GM12878 (cell line): ENCODE measurements at regions of chr7 and their contacts with region 1.

Region 1: GRCh38 chr7:69803699-69804516 is 205.6 kb downstream of the AUTS2 start:
- DNase-seq: peak; percentile 100
- ATAC-seq: peak; percentile 82
- H3K4me3 ChIP-seq: peak overlapping the region; percentile 52; the same call in 1 of the 2 replicates
- H3K27ac ChIP-seq: peak overlapping the region; percentile 97
- H3K4me1 ChIP-seq: peaks cover 55% of the 10 kb centered on the region
- H3K27me3 ChIP-seq: no peaks in the 10 kb centered on the region
- CTCF ChIP-seq: no peak
- EP300 ChIP-seq: peak; percentile 95 to 97
- POLR2A ChIP-seq: no peak
- RAD21 ChIP-seq: no peak; the same call in 1 of the 2 replicates

Region 2: DNA sequence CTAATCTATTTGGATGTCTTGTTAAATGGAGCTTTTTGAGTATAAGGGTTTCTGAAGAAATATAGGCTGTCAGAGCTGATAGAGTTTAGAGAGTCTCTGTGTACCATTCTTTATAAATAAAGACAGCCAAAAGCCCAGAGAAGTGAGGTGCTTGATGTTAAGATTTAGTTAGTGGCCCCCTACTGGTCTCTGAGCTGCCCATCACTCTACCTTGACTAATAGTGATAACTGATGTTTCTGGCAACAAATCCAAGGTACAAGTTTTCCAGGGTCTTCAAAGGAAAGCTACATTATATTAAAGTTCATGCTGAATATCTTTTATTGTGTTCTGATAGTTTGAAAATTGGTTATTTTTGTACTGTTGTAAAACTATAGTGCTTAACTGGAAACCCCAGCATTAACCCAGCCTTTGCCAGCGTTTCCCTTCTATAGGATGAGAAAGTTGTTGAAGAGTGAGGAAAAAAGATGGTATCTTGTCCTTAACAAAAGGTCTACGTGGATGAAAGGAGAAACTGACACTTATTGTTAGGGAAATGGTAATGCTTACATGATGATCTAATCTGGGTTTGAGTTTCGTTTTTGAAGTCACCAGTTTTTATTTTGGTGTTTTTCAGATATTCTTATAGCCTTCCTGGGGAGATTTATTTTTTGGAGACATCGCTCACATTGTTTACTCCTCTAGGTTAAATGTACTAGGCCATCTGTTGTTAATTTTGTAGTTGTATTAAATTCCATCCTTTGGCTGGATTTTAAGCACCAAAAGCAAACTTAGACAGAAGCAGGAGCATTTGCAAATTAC is 126.7 kb before region 1 on chr7:
- CTCF ChIA-PET with region 1: interaction called, 10 read pairs
- POLR2A ChIA-PET with region 1: interaction called, 4 read pairs
- RAD21 ChIA-PET with region 1: interaction called, 5 read pairs
- SMC1A ChIA-PET with region 1: interaction called, 8 read pairs
- in situ Hi-C with region 1: no loop called
- intact Hi-C with region 1: loop called (anchors 5 kb)
- DNase-seq: no peak
- ATAC-seq: peak; percentile 52
- H3K4me3 ChIP-seq: no peak overlapping the region
- H3K27ac ChIP-seq: peak overlapping the region; percentile 77
- H3K4me1 ChIP-seq: peaks cover 38% of the 10 kb centered on the region
- H3K27me3 ChIP-seq: no peaks in the 10 kb centered on the region
- CTCF ChIP-seq: peak; percentile 41 to 51 (median 45)
- EP300 ChIP-seq: no peak
- POLR2A ChIP-seq: no peak
- RAD21 ChIP-seq: peak; percentile 56

Region 3: GRCh38 chr7:69757981-69758430 is 45.9 kb before region 1 on chr7:
- CTCF ChIA-PET with region 1: interaction called, 6 read pairs
- POLR2A ChIA-PET with region 1: interaction called, 5 read pairs
- RAD21 ChIA-PET with region 1: interaction called, 9 read pairs
- SMC1A ChIA-PET with region 1: interaction called, 14 read pairs
- in situ Hi-C with region 1: no loop called
- intact Hi-C with region 1: loop called (anchors 2 kb)
- DNase-seq: no peak
- ATAC-seq: peak; percentile 76
- H3K4me3 ChIP-seq: no peak overlapping the region
- H3K27ac ChIP-seq: no peak overlapping the region
- H3K4me1 ChIP-seq: peaks cover under 1% of the 10 kb centered on the region
- H3K27me3 ChIP-seq: no peaks in the 10 kb centered on the region
- CTCF ChIP-seq: no peak
- EP300 ChIP-seq: 0 out of 4 replicates have a peak, but pooled peaks of 1 of the 2 experiments have one; percentile 25
- POLR2A ChIP-seq: no peak
- RAD21 ChIP-seq: no peak

Region 4: DNA sequence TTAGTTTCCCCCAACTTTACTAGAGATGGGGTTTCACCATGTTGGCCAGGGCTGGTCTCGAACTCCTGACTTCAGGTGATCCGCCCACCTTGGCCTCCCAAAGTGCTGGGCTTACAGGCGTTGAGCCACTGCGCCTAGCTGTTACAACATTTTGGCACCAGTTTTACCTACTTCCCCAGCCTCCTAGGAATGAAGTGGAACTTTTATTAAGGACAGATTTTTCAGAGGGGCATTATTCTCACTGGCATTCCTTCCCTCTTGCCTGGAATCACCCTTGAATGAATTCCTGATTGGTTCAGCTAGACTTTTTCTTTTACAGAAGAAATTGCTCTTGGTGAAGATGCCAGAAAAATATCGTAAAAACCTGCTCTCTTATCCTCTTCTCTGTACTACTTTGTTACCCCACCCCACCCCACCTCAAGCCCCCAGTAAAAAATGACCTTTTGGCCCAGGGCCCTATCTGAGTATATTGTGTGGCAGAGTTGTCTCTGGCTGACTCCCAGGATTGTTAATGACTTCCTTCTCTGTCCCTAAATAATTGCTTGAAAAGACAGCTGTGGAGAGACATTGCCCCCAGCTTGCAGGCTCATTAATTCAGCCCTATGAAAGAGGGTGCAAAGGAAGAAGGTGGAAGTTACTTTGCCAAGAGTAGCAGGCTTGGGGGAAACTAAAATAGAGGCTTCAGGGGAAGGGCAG is 16.0 kb before region 1 on chr7:
- CTCF ChIA-PET with region 1: interaction called, 11 read pairs
- POLR2A ChIA-PET with region 1: no interaction called
- RAD21 ChIA-PET with region 1: interaction called, 7 read pairs
- SMC1A ChIA-PET with region 1: interaction called, 12 read pairs
- in situ Hi-C with region 1: no loop called
- intact Hi-C with region 1: no loop called
- DNase-seq: no peak
- ATAC-seq: no peak
- H3K4me3 ChIP-seq: no peak overlapping the region
- H3K27ac ChIP-seq: no peak overlapping the region
- H3K4me1 ChIP-seq: peaks cover 11% of the 10 kb centered on the region; the same call in 1 of the 2 replicates
- H3K27me3 ChIP-seq: no peaks in the 10 kb centered on the region
- CTCF ChIP-seq: no peak
- EP300 ChIP-seq: no peak
- POLR2A ChIP-seq: no peak
- RAD21 ChIP-seq: no peak

Region 5: DNA sequence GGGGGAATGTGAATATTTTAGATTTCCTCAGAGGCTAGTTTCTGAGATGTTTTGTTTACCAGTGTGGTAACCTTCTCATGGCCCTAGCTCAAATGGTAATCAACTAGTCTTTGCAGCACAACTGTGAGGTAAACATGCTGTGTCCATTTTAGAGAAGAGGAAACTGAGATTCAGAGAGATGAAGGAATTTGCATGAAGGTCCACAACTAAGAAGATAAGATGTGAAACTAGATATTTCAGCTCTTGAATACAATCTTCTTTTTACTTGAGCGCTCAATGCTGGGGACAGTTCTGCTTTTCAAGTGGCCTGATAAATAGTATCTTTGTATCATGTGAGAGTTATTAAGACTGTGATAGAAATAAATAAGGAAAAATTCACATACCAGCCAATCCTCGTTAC is 39.7 kb after region 1 on chr7:
- CTCF ChIA-PET with region 1: interaction called, 3 read pairs
- POLR2A ChIA-PET with region 1: interaction called, 5 read pairs
- RAD21 ChIA-PET with region 1: interaction called, 18 read pairs
- SMC1A ChIA-PET with region 1: interaction called, 11 read pairs
- in situ Hi-C with region 1: no loop called
- intact Hi-C with region 1: loop called (anchors 1 kb)
- DNase-seq: peak; percentile 74
- ATAC-seq: peak; percentile 71
- H3K4me3 ChIP-seq: peak overlapping the region; percentile 25; the same call in 1 of the 2 replicates
- H3K27ac ChIP-seq: peak overlapping the region; percentile 71
- H3K4me1 ChIP-seq: peaks cover 67% of the 10 kb centered on the region
- H3K27me3 ChIP-seq: no peaks in the 10 kb centered on the region
- CTCF ChIP-seq: no peak
- EP300 ChIP-seq: no peak; a peak in 1 of 4 replicates
- POLR2A ChIP-seq: no peak
- RAD21 ChIP-seq: no peak

Region 6: DNA sequence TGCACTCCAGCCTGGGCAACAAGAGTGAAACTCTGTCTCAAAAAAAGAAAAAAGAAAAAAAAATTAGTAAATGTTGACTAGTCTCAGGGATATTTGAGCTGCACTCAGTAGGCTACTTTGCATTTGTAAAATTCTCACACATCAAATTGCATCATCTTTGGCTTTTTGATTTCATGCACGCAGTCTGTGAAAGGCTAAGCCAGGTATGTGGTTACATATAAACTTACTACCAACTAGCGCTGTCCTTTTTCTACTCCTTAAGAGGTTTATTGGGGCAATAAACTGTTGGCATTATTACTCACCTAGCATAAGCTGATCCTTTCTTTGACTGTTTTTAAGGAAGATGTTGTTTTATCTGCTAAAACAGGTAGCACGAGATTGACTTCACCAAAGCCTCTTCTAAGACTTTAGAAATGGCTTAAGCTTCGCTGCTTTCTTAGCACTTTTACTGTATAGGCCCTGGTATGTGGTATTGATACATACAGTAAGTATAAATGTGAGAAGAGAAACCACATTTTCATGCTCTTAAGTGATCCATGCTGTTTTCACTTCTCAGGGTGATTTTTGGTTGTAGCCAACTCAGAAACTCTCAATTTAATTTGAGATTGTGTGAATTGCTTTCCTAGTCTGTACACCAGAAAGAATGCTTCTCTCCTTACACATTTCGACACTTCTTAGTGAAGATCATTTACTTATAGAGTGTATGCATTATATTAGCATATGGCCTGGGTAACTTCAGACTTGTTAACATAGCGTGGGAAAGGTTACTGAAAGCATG is 118.3 kb after region 1 on chr7:
- CTCF ChIA-PET with region 1: interaction called, 3 read pairs
- POLR2A ChIA-PET with region 1: no interaction called
- RAD21 ChIA-PET with region 1: interaction called, 3 read pairs
- SMC1A ChIA-PET with region 1: interaction called, 6 read pairs
- in situ Hi-C with region 1: no loop called
- intact Hi-C with region 1: loop called (anchors 1 kb)
- DNase-seq: peak; percentile 76
- ATAC-seq: peak; percentile 92
- H3K4me3 ChIP-seq: no peak overlapping the region
- H3K27ac ChIP-seq: peak overlapping the region; percentile 91
- H3K4me1 ChIP-seq: peaks cover 16% of the 10 kb centered on the region
- H3K27me3 ChIP-seq: no peaks in the 10 kb centered on the region
- CTCF ChIP-seq: no peak
- EP300 ChIP-seq: no peak
- POLR2A ChIP-seq: no peak
- RAD21 ChIP-seq: peak; percentile 18

Region 7: GRCh38 chr7:70027867-70028266 is 224.0 kb after region 1 on chr7:
- CTCF ChIA-PET with region 1: no interaction called
- POLR2A ChIA-PET with region 1: no interaction called
- RAD21 ChIA-PET with region 1: no interaction called
- SMC1A ChIA-PET with region 1: no interaction called
- in situ Hi-C with region 1: no loop called
- intact Hi-C with region 1: no loop called
- DNase-seq: no peak
- ATAC-seq: peak; percentile 72
- H3K4me3 ChIP-seq: no peak overlapping the region
- H3K27ac ChIP-seq: no peak overlapping the region
- H3K4me1 ChIP-seq: no peaks in the 10 kb centered on the region
- H3K27me3 ChIP-seq: no peaks in the 10 kb centered on the region
- CTCF ChIP-seq: no peak
- EP300 ChIP-seq: no peak
- POLR2A ChIP-seq: no peak
- RAD21 ChIP-seq: no peak